Activated naive CD4-positive, alpha-beta T cell treated with anti-CD3 and anti-CD28 coated beads for 36 hours (primary cell): ENCODE measurements at regions of chr10 and their contacts with region 1.

Region 1: GRCh38 chr10:50636618-50637579 is 13.1 kb upstream of the SGMS1 start:
- DNase-seq: peak; percentile 55
- H3K4me3 Mint-ChIP-seq: no peak overlapping the region
- H3K27ac Mint-ChIP-seq: peak overlapping the region; percentile 9
- H3K4me1 Mint-ChIP-seq: peaks cover 27% of the 10 kb centered on the region
- H3K27me3 Mint-ChIP-seq: peaks cover 4% of the 10 kb centered on the region

Region 2: DNA sequence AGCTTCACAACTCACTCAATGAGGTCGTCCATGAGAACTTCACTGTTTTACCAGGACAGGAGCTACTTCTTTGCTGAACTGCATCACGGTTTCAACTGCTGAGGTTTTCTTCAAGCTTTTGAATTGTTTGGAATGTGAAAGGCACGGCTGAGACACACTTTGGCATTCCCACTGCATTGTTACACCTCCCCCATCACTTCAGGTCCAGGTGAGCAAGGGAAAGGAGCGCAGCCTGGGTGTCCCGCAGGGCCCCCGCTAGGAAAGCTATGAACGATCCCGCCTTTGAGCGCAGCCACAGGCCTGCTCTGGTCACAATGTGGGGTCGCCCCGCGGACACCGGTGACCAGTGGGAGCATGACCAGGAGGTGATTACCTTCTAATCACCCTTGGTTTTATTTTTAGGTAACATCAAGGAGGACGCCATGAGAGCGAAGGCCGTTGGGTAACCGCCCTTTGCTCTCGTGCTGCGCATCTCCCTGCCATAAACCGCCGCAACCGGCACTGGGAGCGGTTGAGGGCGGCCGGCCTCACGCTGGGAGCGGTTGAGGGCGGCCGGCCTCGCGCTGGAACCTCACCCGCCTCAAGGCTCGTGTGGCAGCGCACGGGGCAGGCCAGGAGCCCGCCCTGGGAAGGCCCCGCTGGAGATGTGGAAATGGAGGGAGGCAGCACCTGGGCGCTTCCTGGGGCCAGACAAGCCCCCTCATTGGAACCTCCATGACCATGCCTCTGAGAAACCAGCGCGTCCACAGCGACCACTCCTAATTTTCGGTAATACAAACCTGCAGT is 37.8 kb after region 1 on chr10:
- CTCF ChIA-PET with region 1: no interaction called
- intact Hi-C with region 1: loop called (anchors 2 kb)
- DNase-seq: no peak
- H3K4me3 Mint-ChIP-seq: no peak overlapping the region
- H3K27ac Mint-ChIP-seq: no peak overlapping the region
- H3K4me1 Mint-ChIP-seq: peaks cover 15% of the 10 kb centered on the region
- H3K27me3 Mint-ChIP-seq: no peaks in the 10 kb centered on the region